IMR-90 (cell line): ENCODE measurements at regions of chr6 and their contacts with region 1.

Region 1: DNA sequence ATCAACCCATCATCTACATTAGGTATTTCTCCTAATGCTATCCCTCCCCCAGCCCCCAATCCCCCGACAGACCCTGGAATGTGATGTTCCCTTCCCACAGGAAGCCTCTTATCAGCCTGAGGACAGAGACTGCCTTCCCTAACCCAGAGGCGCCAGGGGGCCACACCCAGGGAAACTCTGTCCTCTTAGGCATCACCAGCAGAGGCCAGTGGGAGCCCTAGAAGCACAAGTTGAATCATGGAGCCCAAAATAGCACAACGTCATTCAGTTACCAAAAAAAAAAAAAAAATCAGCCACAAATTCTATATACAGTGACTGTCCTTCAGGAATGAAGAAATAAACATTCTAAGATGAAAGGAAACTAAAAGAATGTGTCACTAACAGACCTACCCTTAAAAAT is 625.7 kb downstream of the TFAP2A start:
- DNase-seq: peak; percentile 66
- ATAC-seq: peak; percentile 84
- H3K4me3 ChIP-seq: no peak overlapping the region
- H3K27ac ChIP-seq: no peak overlapping the region
- H3K4me1 ChIP-seq: no peaks in the 10 kb centered on the region
- H3K27me3 ChIP-seq: no peaks in the 10 kb centered on the region
- CTCF ChIP-seq: no peak
- POLR2A ChIP-seq: no peak
- RAD21 ChIP-seq: peak; percentile 9; the same call in 1 of the 2 replicates

Region 2: DNA sequence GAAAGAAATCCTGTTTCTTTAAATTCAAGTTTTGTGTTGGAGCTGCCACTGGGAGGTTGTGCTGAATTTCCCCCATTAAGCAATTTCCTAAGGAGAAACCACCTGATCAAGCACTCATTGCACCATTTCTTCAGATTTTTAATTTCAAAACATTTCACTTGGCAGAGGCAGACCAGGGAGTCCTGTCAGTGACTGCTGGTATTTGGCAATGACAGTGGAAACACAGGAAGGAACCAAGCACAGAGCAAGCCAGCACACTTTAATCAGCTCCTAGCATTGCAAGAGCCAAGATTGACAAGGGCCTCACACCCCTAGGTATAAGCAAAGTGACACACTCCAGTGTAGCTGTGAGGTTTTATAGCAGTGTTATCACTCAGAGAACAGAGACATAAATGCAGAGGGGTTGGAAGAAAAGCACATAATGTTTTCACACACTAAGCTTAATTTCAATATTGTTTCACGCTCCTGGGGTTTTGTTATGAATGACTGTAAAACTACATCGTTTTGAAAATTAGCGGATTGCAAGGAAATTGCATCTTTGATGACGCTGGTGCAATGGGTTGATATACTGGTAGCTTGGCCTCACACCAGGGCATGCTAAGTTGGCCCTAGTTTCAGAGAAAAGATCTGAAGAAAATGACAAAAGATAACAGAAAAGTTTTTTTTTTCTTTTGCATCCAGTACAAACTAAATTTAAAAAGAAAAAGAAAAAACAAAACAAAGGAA is 142.7 kb before region 1 on chr6:
- CTCF ChIA-PET with region 1: no interaction called
- POLR2A ChIA-PET with region 1: no interaction called
- dilution Hi-C with region 1: no loop called
- in situ Hi-C with region 1: no loop called
- intact Hi-C with region 1: loop called (anchors 10 kb)
- DNase-seq: peak; percentile 38
- ATAC-seq: peak; percentile 28; the same call in 1 of the 2 replicates
- H3K4me3 ChIP-seq: no peak overlapping the region
- H3K27ac ChIP-seq: peak overlapping the region; percentile 60
- H3K4me1 ChIP-seq: peaks cover 6% of the 10 kb centered on the region
- H3K27me3 ChIP-seq: no peaks in the 10 kb centered on the region
- CTCF ChIP-seq: no peak
- POLR2A ChIP-seq: no peak
- RAD21 ChIP-seq: no peak

Region 3: DNA sequence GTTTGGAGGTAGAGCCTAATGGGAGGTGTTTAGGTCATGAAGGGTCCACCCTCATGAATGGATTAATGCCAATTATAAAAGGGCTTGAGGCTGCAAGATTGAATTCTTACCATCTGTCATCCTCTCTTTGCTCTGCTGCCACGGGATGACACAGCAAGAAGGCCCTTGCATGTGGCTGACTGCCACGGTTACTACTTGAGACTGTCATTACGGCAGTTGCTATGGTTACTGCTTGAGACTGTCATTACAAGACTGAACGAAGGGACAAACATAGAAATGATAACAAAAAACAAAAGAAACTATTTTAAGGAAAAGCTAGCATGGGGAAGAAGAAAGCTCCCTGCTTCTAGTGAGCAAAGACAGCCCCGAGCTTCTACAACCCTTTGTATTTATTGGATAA is 89.3 kb before region 1 on chr6:
- CTCF ChIA-PET with region 1: no interaction called
- POLR2A ChIA-PET with region 1: no interaction called
- dilution Hi-C with region 1: no loop called
- in situ Hi-C with region 1: no loop called
- intact Hi-C with region 1: no loop called
- DNase-seq: no peak
- ATAC-seq: no peak
- H3K4me3 ChIP-seq: no peak overlapping the region
- H3K27ac ChIP-seq: no peak overlapping the region
- H3K4me1 ChIP-seq: no peaks in the 10 kb centered on the region
- H3K27me3 ChIP-seq: no peaks in the 10 kb centered on the region
- CTCF ChIP-seq: no peak
- POLR2A ChIP-seq: no peak
- RAD21 ChIP-seq: no peak

Region 4: GRCh38 chr6:9957215-9957759 is 168.1 kb after region 1 on chr6:
- CTCF ChIA-PET with region 1: no interaction called
- POLR2A ChIA-PET with region 1: no interaction called
- dilution Hi-C with region 1: no loop called
- in situ Hi-C with region 1: no loop called
- intact Hi-C with region 1: no loop called
- DNase-seq: no peak
- ATAC-seq: no peak
- H3K4me3 ChIP-seq: no peak overlapping the region
- H3K27ac ChIP-seq: no peak overlapping the region
- H3K4me1 ChIP-seq: no peaks in the 10 kb centered on the region
- H3K27me3 ChIP-seq: no peaks in the 10 kb centered on the region
- CTCF ChIP-seq: no peak
- POLR2A ChIP-seq: no peak
- RAD21 ChIP-seq: no peak